Left cardiac atrium (tissue), 4 donors: ENCODE measurements at regions of chr10 and their contacts with region 1.

Region 1: GRCh38 chr10:113704637-113705343 is 25.1 kb downstream of the CASP7 start:
- DNase-seq: no peak
- ATAC-seq: peak; percentile 40 to 44

Region 2: GRCh38 chr10:113770346-113770745 is 65.6 kb after region 1 on chr10:
- intact Hi-C with region 1: loop called in 1 of 2 experiments (anchors 5 kb)
- DNase-seq: no peak
- ATAC-seq: peak in 1 of 2 donors; percentile 86

Region 3: GRCh38 chr10:113788604-113789083 is 83.9 kb after region 1 on chr10:
- intact Hi-C with region 1: loop called in 1 of 2 experiments (anchors 10 kb)
- DNase-seq: peak; percentile 36
- ATAC-seq: peak; percentile 57 to 88

Region 4: DNA sequence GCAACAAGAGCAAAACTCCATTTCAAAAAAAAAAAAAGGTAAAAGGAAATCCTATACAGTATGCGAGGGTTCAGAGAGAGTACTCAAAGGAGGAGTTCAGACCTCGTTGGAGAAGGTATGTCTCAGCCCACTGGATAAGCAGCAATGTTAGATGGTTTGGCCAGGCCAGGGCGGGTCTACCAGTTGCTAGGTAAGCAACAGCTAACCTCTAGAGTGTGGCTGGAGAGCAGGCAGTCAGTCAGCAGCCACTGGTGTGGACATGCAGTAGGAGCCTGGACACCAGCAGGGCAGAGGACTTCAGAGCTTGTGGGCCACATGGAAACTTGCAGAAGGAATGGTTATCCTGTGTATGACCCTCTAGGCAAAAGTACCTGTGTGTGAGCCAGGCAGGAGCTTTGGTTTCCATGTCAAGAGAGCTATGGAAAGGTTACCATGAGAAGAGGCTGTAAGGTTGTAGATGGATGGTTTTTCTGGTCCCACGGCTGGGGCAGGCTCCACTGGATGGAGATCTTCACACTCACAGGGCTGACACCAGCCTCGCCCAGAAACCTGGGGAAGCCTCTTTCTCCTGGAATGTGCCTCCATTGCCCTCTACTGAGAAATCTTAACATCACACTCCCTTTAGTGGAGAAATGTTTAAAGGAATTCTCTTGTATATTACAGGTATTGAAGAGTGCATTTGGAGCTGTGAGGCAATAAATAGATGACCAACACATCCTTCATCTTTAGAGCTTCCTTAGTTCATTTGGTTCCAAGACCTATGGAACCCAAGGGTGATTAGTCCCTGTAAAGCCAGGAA is 405.6 kb after region 1 on chr10:
- intact Hi-C with region 1: loop called in 1 of 2 experiments (anchors 5 kb)
- DNase-seq: no peak
- ATAC-seq: no peak